ENCODE measurements at regions of chr14 and their contacts with region 1.

Region 1: DNA sequence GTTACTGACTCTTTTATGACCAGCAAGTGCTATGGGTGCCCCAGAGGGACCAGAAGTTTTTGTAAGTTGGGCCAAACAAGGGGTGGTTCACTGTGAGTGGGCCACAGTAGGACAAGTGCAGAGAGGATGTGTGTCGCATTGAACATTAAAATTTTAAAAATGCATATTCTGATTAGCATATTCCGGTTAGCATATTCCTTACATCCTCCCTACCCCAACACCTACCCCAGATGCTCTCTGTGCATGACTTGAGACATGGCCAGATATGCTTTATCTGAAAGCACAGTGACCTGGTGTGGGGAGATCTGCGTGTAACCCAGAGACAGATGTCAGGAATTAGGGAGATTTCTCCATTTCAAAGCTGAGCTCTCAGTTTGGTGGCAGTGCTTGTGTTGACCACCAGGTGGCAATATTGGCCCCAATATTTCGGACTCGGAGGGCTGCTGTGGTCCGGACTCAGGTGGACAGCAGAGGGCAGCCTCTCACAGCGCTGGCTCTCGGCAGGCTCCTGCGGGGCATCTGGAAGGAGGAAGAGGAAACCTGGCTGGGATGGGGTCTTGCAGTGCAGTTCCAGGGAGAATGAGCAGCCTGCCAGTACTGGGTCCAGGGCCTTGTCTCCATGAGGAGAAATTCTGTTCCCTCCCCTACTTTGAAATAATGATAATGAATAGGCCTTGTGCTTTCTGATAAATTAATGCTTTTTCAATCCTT is 1.6 kb upstream of the CEBPE start:
- DNase-seq: peak; percentile 88 to 94 (median 90)
- ATAC-seq: peak; percentile 75 to 86 (median 80)
- H3K4me3 ChIP-seq: no peak overlapping the region
- H3K27ac ChIP-seq: peak overlapping the region in 5 of 12 donors; percentile 10 to 79 (median 15)
- H3K4me1 ChIP-seq: peaks cover 0 to 31% (median 8%) of the 10 kb centered on the region in 12 donors
- H3K27me3 ChIP-seq: peaks cover 0 to 3% (median 0%) of the 10 kb centered on the region in 9 donors
- CTCF ChIP-seq: peak; percentile 99 to 100 (median 100)
- POLR2A ChIP-seq: no peak

Region 2: DNA sequence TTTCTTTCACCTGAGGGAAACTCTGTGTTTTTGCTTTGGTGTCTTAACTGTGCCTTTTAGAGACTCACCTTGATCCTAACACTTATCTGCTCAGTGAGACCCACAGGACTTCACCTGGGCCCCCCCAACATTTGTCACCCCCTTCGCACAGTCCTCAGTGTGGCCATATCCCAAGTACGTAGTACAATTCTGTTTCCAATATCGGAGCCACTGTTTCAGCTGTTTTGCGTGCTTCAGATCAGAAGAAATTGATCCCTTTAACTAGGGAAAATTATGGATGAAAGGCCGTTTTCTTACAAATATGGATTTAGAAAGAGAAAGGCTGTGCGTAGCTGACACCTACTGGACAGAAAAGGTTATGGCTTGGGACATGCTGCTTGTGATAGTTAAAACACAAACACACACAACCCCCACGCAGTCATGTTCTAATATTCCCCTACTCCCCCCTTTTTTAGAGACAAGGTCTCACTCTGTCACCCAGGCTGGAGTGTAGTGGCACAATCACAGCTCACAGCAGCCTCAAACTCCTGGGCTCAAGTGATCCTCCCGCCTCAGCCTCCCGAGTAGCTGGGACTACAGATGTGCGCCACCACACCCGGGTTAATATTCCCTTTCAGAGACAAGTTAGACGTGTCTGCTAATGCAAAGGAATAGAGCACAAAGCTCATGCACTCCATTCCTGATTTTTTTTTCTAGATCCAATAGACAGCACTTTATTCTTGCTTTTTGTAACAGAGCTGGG is 66.4 kb after region 1 on chr14:
- intact Hi-C with region 1: loop called (anchors 1 to 2 kb)
- DNase-seq: peak in 2 of 5 donors; percentile 24 to 26
- ATAC-seq: peak in 3 of 4 donors; percentile 52 to 72 (median 64)
- H3K4me3 ChIP-seq: no peak overlapping the region
- H3K27ac ChIP-seq: no peak overlapping the region
- H3K4me1 ChIP-seq: peaks cover 0 to 20% (median 5%) of the 10 kb centered on the region in 12 donors
- H3K27me3 ChIP-seq: peaks cover 0 to 3% (median 0%) of the 10 kb centered on the region in 9 donors
- CTCF ChIP-seq: peak; percentile 42 to 83 (median 74)
- POLR2A ChIP-seq: no peak

Measured in heart left ventricle (tissue), 16 donors.